ENCODE measurements at regions of chr5 and their contacts with region 1.

Region 1: DNA sequence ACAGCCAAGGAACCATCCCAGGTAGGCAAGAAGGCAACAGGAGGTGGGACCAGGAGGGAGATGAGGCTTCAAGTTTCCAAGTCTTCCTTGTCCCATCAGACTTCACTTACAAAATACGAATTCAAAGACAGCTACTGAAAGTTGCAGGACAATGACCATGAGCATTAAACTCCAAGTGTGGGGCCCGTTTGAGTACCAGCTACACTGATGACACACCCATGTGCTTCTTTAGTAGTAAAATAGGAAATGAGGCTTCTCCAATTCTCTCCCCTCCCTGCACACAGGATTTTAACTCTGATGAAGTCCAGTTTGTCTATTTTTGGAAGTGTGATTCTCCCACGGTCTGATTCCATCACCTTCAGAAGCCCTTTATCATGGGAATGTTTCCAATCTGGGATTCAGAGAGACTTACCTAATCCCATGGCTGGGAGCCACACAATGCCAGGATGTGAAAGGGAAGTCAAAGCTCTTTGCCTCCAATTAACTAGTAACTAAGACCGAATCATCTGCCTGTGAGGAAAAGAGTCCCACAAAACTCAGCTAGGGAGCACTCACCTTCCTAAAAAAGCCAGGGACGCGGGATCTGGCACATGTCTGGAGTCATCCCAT is 222.8 kb upstream of the MSX2 start:
- DNase-seq: no peak
- H3K4me3 ChIP-seq: no peak overlapping the region
- H3K27ac ChIP-seq: no peak overlapping the region
- H3K4me1 ChIP-seq: peaks cover 0 to 3% (median 0%) of the 10 kb centered on the region in 4 donors
- H3K27me3 ChIP-seq: no peaks in the 10 kb centered on the region
- CTCF ChIP-seq: no peak
- EP300 ChIP-seq: no peak
- POLR2A ChIP-seq: no peak

Region 2: GRCh38 chr5:174436781-174437201 is 64.8 kb before region 1 on chr5:
- in situ Hi-C with region 1: no loop called
- intact Hi-C with region 1: loop called (anchors 1 kb)
- DNase-seq: no peak
- H3K4me3 ChIP-seq: no peak overlapping the region
- H3K27ac ChIP-seq: no peak overlapping the region
- H3K4me1 ChIP-seq: no peaks in the 10 kb centered on the region
- H3K27me3 ChIP-seq: no peaks in the 10 kb centered on the region
- CTCF ChIP-seq: no peak
- EP300 ChIP-seq: no peak
- POLR2A ChIP-seq: no peak